Panc1 (cell line): ENCODE measurements at regions of chr20 and their contacts with region 1.

Region 1: DNA sequence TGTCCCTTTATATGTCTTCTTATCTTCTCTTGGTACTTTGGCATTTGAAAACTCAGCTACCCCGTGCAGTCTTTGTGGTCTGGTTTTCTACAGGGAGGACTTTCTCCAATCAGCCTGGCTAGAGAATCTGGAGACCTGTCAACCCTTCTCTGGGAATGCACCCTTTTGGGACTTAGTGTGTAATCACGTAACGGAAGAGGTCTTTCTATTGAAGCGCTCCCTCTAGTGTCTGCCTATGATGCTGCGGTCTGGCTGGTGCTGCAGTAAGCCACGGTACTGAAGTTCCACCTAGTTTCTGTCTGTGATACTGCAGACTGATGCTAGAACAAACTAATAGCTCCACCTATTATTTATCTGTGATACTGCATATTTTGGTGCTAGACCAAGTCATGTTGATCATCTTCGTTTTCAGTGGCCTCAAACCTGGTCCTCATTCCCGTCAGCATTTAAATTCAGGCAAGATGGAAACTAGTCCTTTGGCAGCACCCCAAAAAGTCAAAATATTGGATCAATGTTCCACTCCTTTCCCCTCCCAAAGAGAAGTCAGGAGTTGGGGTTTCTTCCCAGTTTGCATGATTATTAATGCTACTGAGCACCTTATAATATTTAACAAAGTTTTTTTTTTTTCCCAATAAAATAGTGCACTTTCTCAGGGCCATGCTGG is 12.5 kb upstream of the SIRPB2 start:
- DNase-seq: peak; percentile 91
- ATAC-seq: peak; percentile 100
- H3K4me3 ChIP-seq: no peak overlapping the region
- H3K27ac ChIP-seq: no peak overlapping the region
- H3K4me1 ChIP-seq: peaks cover 3% of the 10 kb centered on the region; the same call in 1 of the 2 replicates
- H3K27me3 ChIP-seq: peaks cover 30% of the 10 kb centered on the region
- CTCF ChIP-seq: peak; percentile 99

Region 2: DNA sequence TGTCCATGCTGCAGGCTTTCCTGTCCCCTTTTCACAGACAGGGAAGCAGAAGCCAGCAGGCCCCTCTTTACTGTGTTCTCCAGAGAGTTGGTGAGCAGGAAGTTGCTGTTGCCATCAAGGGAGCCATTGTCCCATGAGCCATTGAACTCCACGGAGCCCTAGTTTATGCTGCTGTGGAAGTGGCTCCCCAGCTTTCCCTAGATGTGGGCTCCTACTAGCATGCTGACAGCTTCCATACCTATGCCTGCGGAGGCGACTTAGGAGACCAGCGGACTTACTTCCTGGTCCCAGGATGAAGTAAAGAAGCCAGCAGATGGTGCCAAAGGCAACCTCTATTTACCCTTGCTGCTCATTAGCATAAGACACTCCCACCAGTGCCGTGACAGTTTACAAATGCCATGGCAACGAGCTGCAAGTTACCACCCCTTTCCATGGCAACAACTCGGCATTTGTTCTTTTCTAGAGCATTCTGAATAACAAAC is 80.0 kb before region 1 on chr20:
- CTCF ChIA-PET with region 1: no interaction called
- POLR2A ChIA-PET with region 1: no interaction called
- in situ Hi-C with region 1: no loop called
- intact Hi-C with region 1: no loop called
- DNase-seq: no peak
- ATAC-seq: no peak; the same call in 1 of the 2 replicates
- H3K4me3 ChIP-seq: no peak overlapping the region
- H3K27ac ChIP-seq: peak overlapping the region; percentile 78
- H3K4me1 ChIP-seq: peaks cover 32% of the 10 kb centered on the region
- H3K27me3 ChIP-seq: no peaks in the 10 kb centered on the region
- CTCF ChIP-seq: 0 out of 2 replicates have a peak, but pooled peaks have one; percentile 19

Region 3: GRCh38 chr20:1472556-1473245 is 31.0 kb before region 1 on chr20:
- CTCF ChIA-PET with region 1: interaction called, 16 read pairs
- POLR2A ChIA-PET with region 1: no interaction called
- in situ Hi-C with region 1: no loop called
- intact Hi-C with region 1: no loop called
- DNase-seq: no peak
- ATAC-seq: no peak
- H3K4me3 ChIP-seq: no peak overlapping the region
- H3K27ac ChIP-seq: no peak overlapping the region
- H3K4me1 ChIP-seq: peaks cover 12% of the 10 kb centered on the region
- H3K27me3 ChIP-seq: no peaks in the 10 kb centered on the region
- CTCF ChIP-seq: no peak

Region 4: DNA sequence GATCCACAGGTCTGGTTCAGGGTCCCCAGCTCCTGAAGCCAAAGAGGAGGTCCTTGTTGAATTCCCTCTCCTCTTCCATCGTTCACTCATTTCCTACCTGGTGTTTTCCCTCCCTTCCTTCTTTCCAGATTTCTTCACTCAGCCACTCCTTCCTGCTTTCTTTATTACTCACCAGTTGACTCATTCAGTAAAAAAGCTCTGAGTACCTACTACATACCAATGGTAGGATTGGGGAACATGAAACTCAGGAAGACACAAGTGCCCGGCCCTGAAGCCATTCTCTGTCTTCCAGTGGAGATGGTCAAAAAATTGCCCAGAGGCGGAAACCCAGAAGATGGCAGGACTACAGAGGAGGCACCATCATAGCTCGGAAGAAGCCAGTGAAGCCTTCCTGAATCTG is 25.1 kb before region 1 on chr20:
- CTCF ChIA-PET with region 1: interaction called, 11 read pairs
- POLR2A ChIA-PET with region 1: no interaction called
- in situ Hi-C with region 1: no loop called
- intact Hi-C with region 1: no loop called
- DNase-seq: peak; percentile 46
- ATAC-seq: peak; percentile 79; the same call in 1 of the 2 replicates
- H3K4me3 ChIP-seq: no peak overlapping the region
- H3K27ac ChIP-seq: no peak overlapping the region
- H3K4me1 ChIP-seq: peaks cover 5% of the 10 kb centered on the region; the same call in 1 of the 2 replicates
- H3K27me3 ChIP-seq: no peaks in the 10 kb centered on the region
- CTCF ChIP-seq: no peak

Region 5: DNA sequence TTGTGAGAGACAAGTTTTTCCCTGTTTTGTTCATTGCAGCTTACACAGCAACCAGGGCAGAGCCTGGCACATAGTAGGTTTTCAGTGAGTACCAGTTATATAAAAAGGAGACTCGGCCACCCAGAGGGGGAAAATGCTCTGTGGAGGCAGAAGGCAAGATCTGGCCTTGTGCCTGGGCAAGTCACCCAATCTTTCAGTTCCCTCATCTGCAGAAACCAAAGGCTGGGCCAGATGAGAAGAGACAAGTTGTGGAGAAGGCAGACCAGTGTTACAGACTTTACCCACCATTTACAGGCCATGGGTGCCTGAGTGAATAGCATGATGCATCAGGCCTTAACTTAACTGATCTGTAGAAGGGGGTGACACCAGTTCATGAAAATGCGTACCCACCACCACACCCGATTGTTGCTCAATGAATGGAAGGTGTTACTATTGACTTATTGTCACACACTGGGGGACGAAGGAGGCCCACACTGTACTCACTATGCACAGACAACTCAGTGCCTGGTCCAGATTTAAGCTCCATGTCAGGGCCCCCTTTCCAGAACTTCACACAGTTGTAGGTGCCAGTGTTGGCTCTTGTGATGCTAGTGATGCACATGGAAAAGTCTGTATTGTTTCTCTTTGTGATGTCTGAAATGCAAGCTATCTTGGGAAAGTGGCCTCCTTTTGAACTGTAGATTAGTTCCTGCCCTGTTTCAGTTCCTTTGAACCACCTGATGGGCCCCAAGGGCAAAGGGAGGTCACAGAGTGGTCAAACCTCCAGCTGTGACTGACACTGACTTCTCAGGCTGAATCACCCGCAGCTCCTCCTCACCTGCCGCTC is 218.2 kb after region 1 on chr20:
- CTCF ChIA-PET with region 1: no interaction called
- POLR2A ChIA-PET with region 1: no interaction called
- in situ Hi-C with region 1: no loop called
- intact Hi-C with region 1: no loop called
- DNase-seq: no peak
- ATAC-seq: no peak
- H3K4me3 ChIP-seq: no peak overlapping the region
- H3K27ac ChIP-seq: no peak overlapping the region
- H3K4me1 ChIP-seq: no peaks in the 10 kb centered on the region
- H3K27me3 ChIP-seq: peaks cover 3% of the 10 kb centered on the region; the same call in 1 of the 2 replicates
- CTCF ChIP-seq: no peak

Region 6: DNA sequence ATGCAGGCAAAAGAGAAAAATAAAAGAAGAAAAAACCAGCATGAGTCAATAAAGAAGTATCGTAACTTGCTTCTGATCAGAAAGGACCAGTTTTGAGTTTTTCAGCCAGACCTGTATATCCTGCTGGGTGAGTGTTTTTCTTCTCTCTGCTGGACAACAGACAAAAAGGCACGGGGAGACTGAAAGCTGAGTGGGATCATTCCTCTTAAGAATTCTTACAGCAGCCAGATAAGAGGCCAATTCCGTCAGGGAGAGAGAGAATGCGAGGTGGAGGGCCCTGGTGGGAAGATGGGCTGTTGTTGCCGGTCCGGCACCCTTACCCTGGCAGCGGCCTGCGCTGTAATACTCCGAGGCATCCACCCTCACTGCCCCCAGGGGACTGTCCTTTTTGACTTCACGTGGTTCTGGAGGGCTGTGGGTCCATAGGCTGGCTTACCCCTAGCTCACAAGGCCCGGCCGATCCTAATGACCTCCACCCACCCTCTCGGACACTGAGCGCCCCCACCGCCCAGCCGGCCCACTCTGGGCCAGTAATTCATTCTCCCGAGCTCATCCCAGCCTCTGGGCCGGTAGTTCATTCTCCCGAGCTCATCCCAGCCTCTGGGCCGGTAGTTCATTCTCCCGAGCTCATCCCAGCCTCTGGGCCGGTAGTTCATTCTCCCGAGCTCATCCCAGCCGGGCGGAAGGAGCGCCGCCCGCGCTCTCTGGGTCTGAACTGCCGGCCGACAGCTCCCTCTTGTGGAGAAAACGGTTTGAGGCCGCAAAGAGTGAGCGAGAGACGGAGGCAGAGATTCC is 273.2 kb after region 1 on chr20:
- CTCF ChIA-PET with region 1: interaction called, 19 read pairs
- POLR2A ChIA-PET with region 1: no interaction called
- in situ Hi-C with region 1: no loop called
- intact Hi-C with region 1: no loop called
- DNase-seq: peak; percentile 54
- ATAC-seq: peak; percentile 99
- H3K4me3 ChIP-seq: peak overlapping the region; percentile 57 to 70
- H3K27ac ChIP-seq: peak overlapping the region; percentile 40; the same call in 1 of the 2 replicates
- H3K4me1 ChIP-seq: peaks cover 6% of the 10 kb centered on the region
- H3K27me3 ChIP-seq: peaks cover 3% of the 10 kb centered on the region; the same call in 1 of the 2 replicates
- CTCF ChIP-seq: peak; percentile 87